ENCODE measurements at regions of chr12 and their contacts with region 1.

Region 1: DNA sequence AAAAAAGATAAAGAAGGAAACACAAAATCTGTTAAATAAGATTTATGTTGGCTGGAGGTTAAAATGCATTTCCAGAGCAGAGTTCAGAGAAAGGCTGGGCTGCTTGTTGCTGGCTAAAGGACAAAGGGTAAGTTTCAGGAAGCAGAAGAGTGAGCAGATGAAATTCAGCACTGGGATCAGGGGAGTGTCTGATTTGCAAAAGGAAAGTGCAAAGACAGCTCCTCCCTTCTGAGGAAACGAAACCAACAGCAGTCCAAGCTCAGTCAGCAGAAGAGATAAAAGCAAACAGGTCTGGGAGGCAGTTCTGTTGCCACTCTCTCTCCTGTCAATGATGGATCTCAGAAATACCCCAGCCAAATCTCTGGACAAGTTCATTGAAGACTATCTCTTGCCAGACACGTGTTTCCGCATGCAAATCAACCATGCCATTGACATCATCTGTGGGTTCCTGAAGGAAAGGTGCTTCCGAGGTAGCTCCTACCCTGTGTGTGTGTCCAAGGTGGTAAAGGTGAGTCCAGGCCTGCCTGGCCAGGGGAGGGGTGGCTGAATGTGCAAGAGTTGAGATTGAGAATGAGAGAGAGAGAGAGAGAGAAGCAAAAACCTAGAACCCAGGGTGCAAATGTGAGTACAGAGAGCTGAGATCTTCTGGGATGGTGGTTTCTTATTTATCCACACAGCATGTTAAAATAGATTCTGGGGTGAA is at the start of gene OAS1:
- DNase-seq: peak; percentile 72
- CTCF ChIP-seq: no peak

Region 2: GRCh38 chr12:112236386-112236785 is 670.5 kb before region 1 on chr12:
- in situ Hi-C with region 1: no loop called
- DNase-seq: no peak
- CTCF ChIP-seq: no peak

Region 3: DNA sequence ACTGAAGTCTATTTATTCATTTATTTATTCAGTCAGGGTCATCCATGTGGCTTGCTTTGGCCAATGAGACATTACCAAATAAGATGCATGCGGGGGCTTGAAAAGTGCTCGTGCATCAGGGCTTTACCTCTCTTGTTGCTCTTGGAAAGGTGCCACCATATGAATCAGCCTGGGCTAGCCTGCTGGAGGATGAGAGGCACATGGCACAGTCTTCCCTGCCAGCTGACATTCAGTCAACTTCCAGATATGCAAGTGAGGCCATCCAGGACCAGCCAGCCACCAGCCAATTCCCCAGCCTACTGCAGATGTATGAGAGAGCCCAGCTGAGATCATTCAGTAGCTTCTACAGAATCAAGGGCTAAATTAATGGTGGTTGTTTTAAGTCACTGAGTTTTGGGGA is 220.5 kb before region 1 on chr12:
- in situ Hi-C with region 1: no loop called
- DNase-seq: no peak
- CTCF ChIP-seq: no peak

Region 4: DNA sequence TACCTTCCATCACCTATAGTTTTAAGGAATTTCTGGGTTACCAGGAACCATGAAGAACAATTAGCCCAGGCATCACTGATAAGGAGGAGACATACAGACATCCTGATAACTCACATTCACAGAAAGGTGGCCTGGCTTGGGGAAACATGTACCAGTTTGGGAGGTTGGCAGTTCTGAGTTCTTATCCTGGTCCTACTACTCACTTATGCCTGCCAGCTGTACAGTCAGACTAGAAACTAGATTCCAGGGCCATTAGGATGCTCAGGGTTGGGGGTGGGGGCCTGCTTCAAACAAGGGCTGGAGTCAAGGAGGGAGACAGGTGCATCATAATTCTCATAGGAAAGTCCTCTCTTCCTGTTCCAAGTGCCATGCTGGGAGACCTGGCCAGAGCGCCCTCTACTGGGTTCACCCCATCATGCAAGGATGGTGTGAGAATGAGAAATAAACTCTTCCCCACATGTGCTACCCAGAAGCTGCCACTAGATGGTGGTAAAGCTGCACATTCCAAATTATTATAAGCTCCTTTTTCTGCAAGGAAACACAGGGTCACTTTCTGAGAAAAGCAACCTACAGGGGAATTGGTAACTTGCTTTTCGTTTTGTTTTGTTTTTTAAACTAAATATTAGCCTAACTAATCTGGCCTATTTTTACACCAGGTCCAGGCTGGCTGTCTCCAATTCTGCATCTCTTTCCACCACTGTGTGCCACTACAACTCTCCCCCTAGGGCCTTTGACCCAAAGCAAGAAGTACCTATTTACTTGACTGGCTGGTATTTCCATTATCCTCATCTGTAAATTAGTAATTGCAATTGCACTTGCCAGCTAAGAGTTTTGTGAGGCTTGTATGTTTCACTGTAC is 85.9 kb after region 1 on chr12:
- in situ Hi-C with region 1: loop called (anchors 10 kb)
- DNase-seq: peak; percentile 55
- CTCF ChIP-seq: peak; percentile 77

Measured in GM13976 (cell line).